Mammary epithelial cell (primary cell): ENCODE measurements at regions of chr3 and their contacts with region 1.

Region 1: GRCh38 chr3:186806089-186807055 is at the start of gene RFC4:
- DNase-seq: peak; percentile 74
- H3K4me3 ChIP-seq: peak within 1 kb of the TSS; percentile 65 to 87 (median 71)
- H3K27ac ChIP-seq: peak within 1 kb of the TSS; percentile 72
- H3K4me1 ChIP-seq: peaks cover 16% of the 10 kb centered on the region
- H3K27me3 ChIP-seq: no peaks in the 10 kb centered on the region
- CTCF ChIP-seq: no peak
- total RNA-seq, gene RFC4: 12.3 to 27.5 TPM

Region 2: DNA sequence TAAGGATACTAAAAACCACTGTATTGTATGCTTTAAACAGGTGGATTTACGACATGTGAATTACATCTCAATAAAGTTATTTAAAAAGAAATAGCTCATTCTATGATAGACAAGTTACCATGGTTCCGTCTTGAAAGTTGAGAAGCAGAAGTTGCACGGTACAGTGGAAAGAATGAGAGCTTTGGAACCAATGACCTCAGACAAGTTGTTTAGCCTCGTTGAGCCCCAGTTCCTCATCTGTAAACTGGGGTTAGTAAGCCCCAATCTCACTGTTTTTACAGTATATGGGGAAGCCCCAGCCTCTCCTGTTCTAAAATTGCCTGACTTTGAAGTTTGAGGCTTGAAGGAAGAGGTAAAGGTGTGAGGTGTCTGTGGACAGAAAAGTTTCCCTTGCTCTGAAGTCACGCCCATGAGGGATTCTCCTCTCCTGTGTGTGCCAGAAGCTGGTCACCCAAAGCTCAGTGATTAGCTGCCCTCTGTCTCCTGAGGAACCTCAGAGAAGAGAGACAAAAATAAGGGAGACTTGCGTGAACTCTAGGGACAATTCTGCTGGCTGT is 272.2 kb before region 1 on chr3:
- CTCF ChIA-PET with region 1: no interaction called
- dilution Hi-C with region 1: no loop called
- in situ Hi-C with region 1: no loop called
- intact Hi-C with region 1: no loop called
- DNase-seq: no peak
- H3K4me3 ChIP-seq: no peak overlapping the region
- H3K27ac ChIP-seq: no peak overlapping the region
- H3K4me1 ChIP-seq: no peaks in the 10 kb centered on the region
- H3K27me3 ChIP-seq: no peaks in the 10 kb centered on the region
- CTCF ChIP-seq: no peak

Region 3: GRCh38 chr3:186732169-186732766 is 74.1 kb before region 1 on chr3:
- CTCF ChIA-PET with region 1: no interaction called
- dilution Hi-C with region 1: loop called (anchors 5 kb)
- in situ Hi-C with region 1: no loop called
- intact Hi-C with region 1: no loop called
- DNase-seq: no peak
- H3K4me3 ChIP-seq: no peak overlapping the region
- H3K27ac ChIP-seq: no peak overlapping the region
- H3K4me1 ChIP-seq: no peaks in the 10 kb centered on the region
- H3K27me3 ChIP-seq: no peaks in the 10 kb centered on the region
- CTCF ChIP-seq: no peak

Region 4: DNA sequence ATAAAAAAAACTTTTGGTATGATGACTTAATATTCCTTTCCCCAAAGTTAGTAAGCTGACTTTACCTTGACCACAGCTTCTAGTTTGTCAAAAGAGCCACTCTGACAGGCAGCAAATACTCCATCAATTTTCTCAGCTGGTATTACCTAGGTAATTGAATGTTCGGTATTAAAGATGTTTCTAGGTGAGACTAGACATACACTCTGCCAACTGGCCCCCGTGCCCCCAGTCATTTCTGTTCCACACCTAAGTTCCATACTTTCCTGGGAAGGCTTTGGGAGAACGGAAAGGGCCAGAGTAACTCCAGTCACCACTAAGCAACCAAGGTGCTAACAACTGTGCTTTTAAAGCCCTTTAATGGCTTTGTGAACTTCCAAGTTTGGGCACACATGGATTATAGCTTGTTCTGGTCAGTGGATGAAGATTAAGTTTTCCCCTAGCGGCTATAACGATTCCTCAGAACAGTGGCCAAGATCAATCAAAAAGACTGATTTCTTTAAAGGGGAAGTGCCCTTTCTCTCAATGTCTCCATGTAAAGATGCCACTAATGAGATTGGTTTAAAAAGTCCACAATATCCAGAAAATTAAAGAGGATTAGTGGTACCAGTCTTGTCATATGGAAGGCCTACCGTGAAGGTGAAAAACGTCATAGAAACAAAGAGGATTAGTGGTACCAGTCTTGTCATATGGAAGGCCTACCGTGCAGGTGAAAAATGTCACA is 16.0 kb before region 1 on chr3:
- CTCF ChIA-PET with region 1: interaction called, 13 read pairs
- dilution Hi-C with region 1: no loop called
- in situ Hi-C with region 1: no loop called
- intact Hi-C with region 1: no loop called
- DNase-seq: peak; percentile 50
- H3K4me3 ChIP-seq: no peak overlapping the region
- H3K27ac ChIP-seq: no peak overlapping the region
- H3K4me1 ChIP-seq: peaks cover 19% of the 10 kb centered on the region
- H3K27me3 ChIP-seq: no peaks in the 10 kb centered on the region
- CTCF ChIP-seq: peak; percentile 13 to 14

Region 5: DNA sequence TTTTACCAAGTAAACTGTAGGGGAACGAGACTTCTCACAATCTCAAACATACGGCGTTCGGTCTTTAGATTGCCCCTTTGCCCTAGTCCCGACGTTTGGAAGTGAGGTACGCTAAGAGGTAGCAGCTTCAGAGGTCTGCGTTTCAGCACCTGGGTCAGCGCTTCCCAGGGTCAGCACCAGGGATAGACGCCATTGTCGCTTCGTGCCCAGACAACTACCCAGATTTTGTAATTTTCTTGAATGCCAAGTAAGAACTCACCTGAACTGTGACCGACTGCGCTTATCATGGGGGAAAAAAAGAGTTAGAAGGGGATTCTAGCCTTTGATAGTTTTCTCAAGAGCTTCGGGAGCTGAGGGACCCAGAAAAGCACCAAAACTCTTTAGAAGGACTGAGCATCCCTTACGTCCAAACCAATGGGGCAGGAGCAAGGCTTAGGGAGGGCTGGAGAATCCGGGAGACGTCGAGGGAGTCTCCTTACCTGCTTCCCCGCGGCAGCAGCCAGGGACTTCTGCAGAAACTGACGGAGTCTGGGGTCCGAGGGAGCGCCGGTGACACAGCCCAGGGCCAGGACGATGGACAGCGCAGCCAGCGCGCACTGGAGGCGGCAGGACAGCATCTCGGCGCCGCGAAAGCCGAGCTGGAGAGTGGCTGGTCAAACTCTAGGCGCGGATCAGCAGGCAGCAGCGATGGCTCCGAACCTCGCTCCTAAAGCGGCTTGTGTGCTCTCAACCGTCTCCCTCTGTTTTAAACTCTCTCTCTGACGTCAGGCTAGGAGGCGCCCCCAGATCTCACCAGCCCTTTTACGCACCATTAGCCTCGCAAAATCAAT is 863.5 kb after region 1 on chr3 and contains the start of gene SST:
- CTCF ChIA-PET with region 1: no interaction called
- dilution Hi-C with region 1: no loop called
- in situ Hi-C with region 1: no loop called
- intact Hi-C with region 1: no loop called
- DNase-seq: peak; percentile 52
- H3K4me3 ChIP-seq: no peak within 1 kb of the TSS
- H3K27ac ChIP-seq: no peak within 1 kb of the TSS
- H3K4me1 ChIP-seq: no peaks in the 10 kb centered on the region
- H3K27me3 ChIP-seq: peaks cover 4% of the 10 kb centered on the region
- CTCF ChIP-seq: no peak
- total RNA-seq, gene SST: not detected